ENCODE measurements at regions of chr5 and their contacts with region 1.

Region 1: DNA sequence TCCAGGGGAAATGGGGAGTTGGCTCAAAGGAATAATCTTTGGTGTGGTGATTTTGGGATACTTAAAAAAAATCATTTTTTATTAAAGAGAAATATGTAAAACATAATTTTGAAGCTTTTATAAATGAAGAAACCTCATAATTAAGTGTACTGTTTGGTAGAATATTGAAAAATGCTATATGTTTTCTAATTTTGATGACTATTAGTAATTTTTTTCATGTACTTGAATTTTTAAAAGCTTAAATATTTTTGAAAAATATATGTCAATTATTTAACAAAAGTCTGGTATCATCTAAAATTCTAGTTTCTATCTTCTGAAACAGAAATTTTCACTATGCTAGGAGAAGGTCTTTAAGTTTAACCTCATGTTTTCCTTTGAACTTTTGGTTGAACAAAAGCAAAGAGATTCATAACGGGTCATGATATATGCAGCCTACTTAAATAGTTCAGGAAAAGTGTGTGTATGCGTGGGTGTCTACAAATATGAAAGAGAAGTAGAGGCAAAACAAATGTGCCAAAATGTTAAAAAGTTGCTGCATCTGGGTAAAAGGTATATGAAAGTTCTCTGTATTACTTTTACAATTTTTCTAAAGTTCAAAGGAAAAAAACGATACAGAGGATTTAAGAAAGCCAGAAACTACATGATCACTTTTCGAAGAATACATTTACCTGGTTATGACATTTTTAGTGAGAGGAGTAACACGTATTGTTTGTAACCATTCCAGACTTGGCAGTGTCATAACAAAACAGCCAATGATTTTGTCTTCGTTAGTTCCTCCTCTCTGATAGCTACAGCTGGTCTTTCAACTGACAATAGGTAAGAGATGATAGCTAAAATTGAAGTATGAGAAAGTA is 117.3 kb upstream of the TNFAIP8 start:
- DNase-seq: no peak
- H3K4me3 Mint-ChIP-seq: no peak overlapping the region
- H3K27ac Mint-ChIP-seq: peak overlapping the region; percentile 61
- H3K4me1 Mint-ChIP-seq: peaks cover 16% of the 10 kb centered on the region
- H3K27me3 Mint-ChIP-seq: no peaks in the 10 kb centered on the region

Region 2: GRCh38 chr5:119267958-119268386 is 29.5 kb after region 1 on chr5:
- intact Hi-C with region 1: loop called (anchors 2 kb)
- DNase-seq: peak; percentile 70
- H3K4me3 Mint-ChIP-seq: peak overlapping the region; percentile 99
- H3K27ac Mint-ChIP-seq: peak overlapping the region; percentile 95
- H3K4me1 Mint-ChIP-seq: peaks cover 51% of the 10 kb centered on the region
- H3K27me3 Mint-ChIP-seq: no peaks in the 10 kb centered on the region